HCT116 (cell line): ENCODE measurements at regions of chr19 and their contacts with region 1.

Region 1: GRCh38 chr19:42108527-42109389 is 23.5 kb downstream of the POU2F2 start:
- DNase-seq: peak; percentile 83
- ATAC-seq: peak; percentile 91
- H3K4me3 ChIP-seq: no peak overlapping the region
- H3K27ac ChIP-seq: no peak overlapping the region
- H3K4me1 ChIP-seq: peaks cover 14 to 27% of the 10 kb centered on the region in 2 experiments
- H3K27me3 ChIP-seq: peaks cover 16% of the 10 kb centered on the region; the same call in 1 of the 2 replicates
- CTCF ChIP-seq: peak; percentile 100
- POLR2A ChIP-seq: no peak
- RAD21 ChIP-seq: peak; percentile 100

Region 2: GRCh38 chr19:42042455-42043170 is 66.1 kb before region 1 on chr19:
- CTCF ChIA-PET with region 1: no interaction called
- POLR2A ChIA-PET with region 1: no interaction called
- RAD21 ChIA-PET with region 1: no interaction called
- intact Hi-C with region 1: no loop called
- DNase-seq: no peak
- ATAC-seq: no peak
- H3K4me3 ChIP-seq: no peak overlapping the region
- H3K27ac ChIP-seq: no peak overlapping the region
- H3K4me1 ChIP-seq: no peaks in the 10 kb centered on the region
- H3K27me3 ChIP-seq: no peaks in the 10 kb centered on the region
- CTCF ChIP-seq: no peak
- POLR2A ChIP-seq: no peak
- RAD21 ChIP-seq: no peak

Region 3: GRCh38 chr19:42184401-42184861 is 75.7 kb after region 1 on chr19:
- CTCF ChIA-PET with region 1: interaction called, 8 read pairs
- POLR2A ChIA-PET with region 1: no interaction called
- RAD21 ChIA-PET with region 1: no interaction called
- intact Hi-C with region 1: loop called (anchors 1 kb)
- DNase-seq: peak; percentile 64
- ATAC-seq: peak; percentile 96
- H3K4me3 ChIP-seq: no peak overlapping the region
- H3K27ac ChIP-seq: no peak overlapping the region
- H3K4me1 ChIP-seq: peaks cover 0 to 6% of the 10 kb centered on the region in 2 experiments; a peak in 1 of 4 replicates
- H3K27me3 ChIP-seq: peaks cover 10% of the 10 kb centered on the region; the same call in 1 of the 2 replicates
- CTCF ChIP-seq: peak; percentile 91 to 95 (median 92)
- POLR2A ChIP-seq: no peak
- RAD21 ChIP-seq: peak; percentile 80

Region 4: GRCh38 chr19:42325273-42325895 is 216.6 kb after region 1 on chr19 and contains the start of gene MEGF8:
- CTCF ChIA-PET with region 1: no interaction called
- POLR2A ChIA-PET with region 1: no interaction called
- RAD21 ChIA-PET with region 1: no interaction called
- intact Hi-C with region 1: loop called (anchors 1 kb)
- DNase-seq: peak; percentile 97
- ATAC-seq: peak; percentile 96
- H3K4me3 ChIP-seq: peak within 1 kb of the TSS; percentile 90 to 95
- H3K27ac ChIP-seq: peak within 1 kb of the TSS; percentile 62
- H3K4me1 ChIP-seq: peaks cover 10 to 17% of the 10 kb centered on the region in 2 experiments
- H3K27me3 ChIP-seq: no peaks in the 10 kb centered on the region
- CTCF ChIP-seq: peak; percentile 90 to 94 (median 94)
- POLR2A ChIP-seq: peak; percentile 31
- RAD21 ChIP-seq: peak; percentile 86
- total RNA-seq, gene MEGF8: 24.0 TPM

Region 5: DNA sequence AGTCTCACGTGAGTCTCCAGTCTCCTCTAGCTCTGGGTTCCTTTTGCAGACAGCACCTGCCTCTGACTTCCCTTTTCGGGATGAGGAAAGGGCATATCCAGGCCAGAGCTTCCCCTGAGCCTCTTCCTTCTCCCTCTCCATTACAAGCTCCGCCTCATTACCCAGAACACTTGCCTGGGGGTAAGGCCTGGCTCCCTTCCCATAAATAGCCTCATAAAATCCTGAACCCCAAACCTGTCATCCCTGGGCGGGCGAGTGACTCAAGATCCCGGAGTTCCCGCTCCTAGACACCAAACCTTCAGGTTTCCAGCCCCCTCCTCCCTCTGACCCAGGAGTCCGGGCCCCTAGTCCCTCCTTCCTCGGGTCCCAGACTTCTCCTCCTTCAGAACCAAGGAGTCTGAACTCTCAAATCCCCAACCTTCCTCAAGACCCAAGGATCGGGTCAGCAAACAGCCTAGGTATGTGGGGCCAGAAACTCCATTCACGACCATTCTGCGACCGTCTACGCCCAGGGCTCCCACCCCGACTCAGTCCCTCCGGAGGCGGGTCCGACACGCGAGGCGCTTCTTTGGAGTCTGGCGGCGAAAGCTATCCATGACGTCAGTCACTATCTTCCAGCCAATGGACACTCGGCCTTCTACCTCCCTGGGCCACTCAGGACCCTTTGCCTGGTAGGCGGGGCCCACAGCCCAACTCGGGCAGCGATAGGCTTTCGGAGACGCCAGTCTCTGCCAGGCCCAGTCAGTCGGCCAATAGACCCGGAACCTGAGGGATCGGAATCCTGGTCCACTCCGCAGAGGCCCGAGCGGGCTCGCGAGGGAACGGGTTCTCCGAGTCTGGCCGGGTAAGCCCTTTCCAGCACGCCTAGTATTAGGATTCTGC is 287.9 kb after region 1 on chr19:
- CTCF ChIA-PET with region 1: interaction called, 3 read pairs
- POLR2A ChIA-PET with region 1: no interaction called
- RAD21 ChIA-PET with region 1: no interaction called
- intact Hi-C with region 1: loop called (anchors 5 kb)
- DNase-seq: peak; percentile 98
- ATAC-seq: peak; percentile 95
- H3K4me3 ChIP-seq: peak overlapping the region; percentile 88 to 90
- H3K27ac ChIP-seq: peak overlapping the region; percentile 82
- H3K4me1 ChIP-seq: peaks cover 10 to 39% of the 10 kb centered on the region in 2 experiments
- H3K27me3 ChIP-seq: no peaks in the 10 kb centered on the region
- CTCF ChIP-seq: no peak
- POLR2A ChIP-seq: peak; percentile 94
- RAD21 ChIP-seq: no peak

Region 6: GRCh38 chr19:42440357-42441048 is 331.7 kb after region 1 on chr19:
- CTCF ChIA-PET with region 1: interaction called, 11 read pairs
- POLR2A ChIA-PET with region 1: no interaction called
- RAD21 ChIA-PET with region 1: no interaction called
- intact Hi-C with region 1: loop called (anchors 5 kb)
- DNase-seq: peak; percentile 42
- ATAC-seq: peak; percentile 78
- H3K4me3 ChIP-seq: no peak overlapping the region
- H3K27ac ChIP-seq: no peak overlapping the region
- H3K4me1 ChIP-seq: peaks cover 0 to 10% of the 10 kb centered on the region in 2 experiments; a peak in 2 of 4 replicates
- H3K27me3 ChIP-seq: no peaks in the 10 kb centered on the region
- CTCF ChIP-seq: peak; percentile 79 to 99 (median 95); a peak in 5 of 6 replicates
- POLR2A ChIP-seq: no peak
- RAD21 ChIP-seq: peak; percentile 49